HepG2 (cell line): ENCODE measurements at regions of chr6 and their contacts with region 1.

Region 1: GRCh38 chr6:75689576-75689975 is 59.5 kb upstream of the MYO6 start:
- DNase-seq: no peak
- ATAC-seq: peak; percentile 25; the same call in 1 of the 3 replicates
- H3K4me3 ChIP-seq: no peak overlapping the region
- H3K27ac ChIP-seq: no peak overlapping the region
- H3K4me1 ChIP-seq: no peaks in the 10 kb centered on the region
- H3K27me3 ChIP-seq: no peaks in the 10 kb centered on the region
- CTCF ChIP-seq: no peak
- EP300 ChIP-seq: no peak
- POLR2A ChIP-seq: no peak
- RAD21 ChIP-seq: no peak

Region 2: GRCh38 chr6:75748743-75749501 is 59.3 kb after region 1 on chr6 and contains the start of gene MYO6:
- CTCF ChIA-PET with region 1: no interaction called
- POLR2A ChIA-PET with region 1: no interaction called
- in situ Hi-C with region 1: no loop called
- intact Hi-C with region 1: loop called (anchors 5 kb)
- DNase-seq: peak; percentile 26
- ATAC-seq: peak; percentile 95
- H3K4me3 ChIP-seq: peak within 1 kb of the TSS; percentile 70 to 96 (median 96)
- H3K27ac ChIP-seq: peak within 1 kb of the TSS; percentile 68
- H3K4me1 ChIP-seq: peaks cover 41% of the 10 kb centered on the region
- H3K27me3 ChIP-seq: peaks cover 0 to 8% of the 10 kb centered on the region in 2 experiments; a peak in 4 of 5 replicates
- CTCF ChIP-seq: 0 out of 2 replicates have a peak, but pooled peaks have one; percentile 8
- EP300 ChIP-seq: no peak
- POLR2A ChIP-seq: peak; percentile 66 to 92
- RAD21 ChIP-seq: peak; percentile 46; the same call in 1 of the 2 replicates
- total RNA-seq, gene MYO6: 5.4 and 13.1 TPM in 2 replicates